Esophagus muscularis mucosa (tissue), 4 donors: ENCODE measurements at regions of chr10 and their contacts with region 1.

Region 1: DNA sequence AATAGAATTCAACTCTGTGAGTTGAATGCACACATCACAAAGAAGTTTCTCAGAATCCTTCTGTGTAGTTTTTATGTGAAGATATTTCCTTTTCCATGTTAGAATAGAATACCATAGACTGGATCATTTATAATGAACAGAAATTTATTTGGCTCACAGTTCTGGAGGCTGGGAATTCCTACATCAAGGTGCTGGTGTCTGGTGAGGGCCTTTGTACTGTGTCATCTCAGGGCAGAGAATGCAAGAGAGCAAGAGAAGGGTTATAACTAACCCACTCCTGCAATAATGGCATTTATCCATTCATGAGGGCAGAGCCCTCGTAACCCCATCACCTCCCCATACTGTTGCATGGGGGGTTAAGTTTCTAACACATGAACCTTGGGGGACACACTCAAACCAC is 18.4 kb upstream of the DIP2C start:
- DNase-seq: no peak
- H3K4me3 ChIP-seq: no peak overlapping the region
- H3K27ac ChIP-seq: no peak overlapping the region
- H3K4me1 ChIP-seq: no peaks in the 10 kb centered on the region
- H3K27me3 ChIP-seq: no peaks in the 10 kb centered on the region
- CTCF ChIP-seq: no peak
- EP300 ChIP-seq: no peak
- POLR2A ChIP-seq: no peak

Region 2: DNA sequence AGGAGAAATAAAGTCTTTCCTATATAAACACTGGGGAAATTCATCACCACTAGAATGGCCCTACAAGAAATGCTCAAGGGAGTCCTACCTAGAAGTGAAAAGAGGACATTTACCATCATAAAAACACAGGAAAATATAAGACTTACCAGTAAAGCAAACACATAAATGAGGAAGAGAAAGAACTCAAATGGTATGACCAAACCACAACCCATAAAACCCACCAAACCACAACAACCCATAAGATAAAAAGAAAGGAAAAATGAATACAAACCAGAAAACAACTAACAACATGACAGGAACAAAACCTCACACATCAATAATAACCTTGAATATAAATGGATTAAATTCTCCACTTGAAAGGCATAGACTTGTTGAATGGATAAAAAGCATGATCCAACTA is 53.5 kb after region 1 on chr10:
- intact Hi-C with region 1: loop called (anchors 5 kb)
- DNase-seq: no peak
- H3K4me3 ChIP-seq: no peak overlapping the region
- H3K27ac ChIP-seq: no peak overlapping the region
- H3K4me1 ChIP-seq: no peaks in the 10 kb centered on the region
- H3K27me3 ChIP-seq: no peaks in the 10 kb centered on the region
- CTCF ChIP-seq: no peak
- EP300 ChIP-seq: no peak
- POLR2A ChIP-seq: no peak

Region 3: DNA sequence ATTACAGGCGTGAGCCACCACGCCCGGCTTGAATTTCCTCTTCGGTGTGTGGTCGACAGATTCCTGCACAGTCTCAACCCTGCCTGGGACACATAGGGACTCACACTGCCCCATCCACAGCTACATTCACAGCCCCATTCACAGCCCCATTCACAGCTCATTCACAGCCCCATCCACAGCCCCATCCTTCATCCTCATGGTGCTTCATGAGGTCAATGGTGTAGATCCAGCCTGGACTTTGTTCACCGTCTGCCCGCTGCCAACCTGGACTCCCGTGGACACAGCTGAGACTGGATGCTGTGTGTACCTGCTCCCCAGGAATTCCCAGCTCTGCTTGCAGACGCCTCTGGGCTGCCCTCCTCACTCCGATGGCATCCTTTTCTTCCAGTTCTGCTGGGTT is 312.6 kb after region 1 on chr10:
- intact Hi-C with region 1: no loop called
- DNase-seq: peak; percentile 90
- H3K4me3 ChIP-seq: no peak overlapping the region
- H3K27ac ChIP-seq: no peak overlapping the region
- H3K4me1 ChIP-seq: no peaks in the 10 kb centered on the region
- H3K27me3 ChIP-seq: no peaks in the 10 kb centered on the region
- CTCF ChIP-seq: no peak
- EP300 ChIP-seq: no peak
- POLR2A ChIP-seq: no peak